ENCODE measurements at regions of chr4 and their contacts with region 1.

Region 1: DNA sequence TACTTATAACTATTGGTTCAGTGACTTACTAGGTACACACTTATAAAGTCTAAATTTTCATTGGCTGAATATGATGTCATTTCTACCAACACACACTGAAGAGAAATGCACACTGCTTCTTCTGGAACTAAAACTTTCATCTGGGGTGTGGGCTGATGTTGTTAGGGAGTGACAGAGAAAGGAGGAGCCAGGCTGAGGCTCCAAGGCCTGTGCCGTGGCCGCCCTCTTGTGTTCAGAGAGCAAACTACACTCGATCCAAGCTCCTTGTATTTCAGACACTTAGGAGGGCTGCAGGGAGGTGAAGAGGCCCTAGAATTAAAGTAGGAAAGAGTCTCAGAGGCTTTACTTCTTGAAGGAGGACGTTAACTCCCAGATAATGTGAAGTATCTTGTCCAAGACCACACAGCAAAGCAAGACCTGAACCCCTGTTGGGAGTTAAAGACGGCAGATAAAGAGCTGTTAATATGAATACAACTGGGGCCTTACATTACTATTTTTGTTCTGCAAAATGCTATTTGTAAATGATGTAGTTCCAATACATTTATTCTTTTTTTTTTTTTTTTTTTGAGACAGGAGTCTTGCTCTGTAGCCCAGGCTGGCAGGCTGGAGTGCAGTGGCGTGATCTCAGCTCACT is 137.5 kb downstream of the AFAP1 start:
- DNase-seq: peak; percentile 82 to 94
- H3K4me3 ChIP-seq: no peak overlapping the region
- H3K27ac ChIP-seq: peak overlapping the region in 1 of 5 donors; percentile 29
- H3K4me1 ChIP-seq: peaks cover 28 to 36% (median 32%) of the 10 kb centered on the region in 4 donors
- H3K27me3 ChIP-seq: no peaks in the 10 kb centered on the region
- CTCF ChIP-seq: peak in 5 of 7 experiments; percentile 80 to 84 (median 83)
- EP300 ChIP-seq: no peak
- POLR2A ChIP-seq: no peak

Region 2: GRCh38 chr4:7766661-7767345 is 35.4 kb before region 1 on chr4:
- intact Hi-C with region 1: loop called (anchors 5 kb)
- DNase-seq: no peak
- H3K4me3 ChIP-seq: no peak overlapping the region
- H3K27ac ChIP-seq: no peak overlapping the region
- H3K4me1 ChIP-seq: peaks cover 0 to 4% (median 0%) of the 10 kb centered on the region in 4 donors
- H3K27me3 ChIP-seq: no peaks in the 10 kb centered on the region
- CTCF ChIP-seq: no peak
- EP300 ChIP-seq: no peak
- POLR2A ChIP-seq: no peak

Region 3: GRCh38 chr4:7987148-7987989 is 185.2 kb after region 1 on chr4:
- intact Hi-C with region 1: loop called (anchors 5 kb)
- DNase-seq: peak; percentile 81 to 87
- H3K4me3 ChIP-seq: no peak overlapping the region
- H3K27ac ChIP-seq: no peak overlapping the region
- H3K4me1 ChIP-seq: peaks cover 0 to 16% (median 9%) of the 10 kb centered on the region in 4 donors
- H3K27me3 ChIP-seq: no peaks in the 10 kb centered on the region
- CTCF ChIP-seq: peak in 5 of 7 experiments; percentile 70 to 87 (median 79)
- EP300 ChIP-seq: no peak
- POLR2A ChIP-seq: no peak

Measured in stomach (tissue), 19 donors.